SK-N-SH (cell line): ENCODE measurements at regions of chr12 and their contacts with region 1.

Region 1: DNA sequence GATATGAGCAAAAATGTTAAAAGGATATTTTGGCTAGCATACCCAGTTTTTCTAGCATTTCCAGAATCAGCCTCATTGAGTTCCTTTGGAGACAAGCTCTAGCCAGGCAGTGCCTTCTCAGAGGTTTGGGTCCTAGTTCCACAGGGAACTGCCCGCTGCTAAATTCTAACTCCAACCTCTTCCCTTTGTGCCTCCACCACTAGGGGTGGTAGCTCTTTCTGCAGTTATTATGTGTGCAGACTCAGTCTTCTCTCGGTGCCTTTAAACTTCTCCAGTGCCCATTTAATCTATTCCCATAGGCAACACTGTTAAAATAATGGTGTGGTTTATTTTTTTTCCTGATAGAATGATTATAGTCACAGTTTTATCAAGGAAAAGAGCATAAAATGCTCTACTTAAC is 21.5 kb upstream of the SLC25A3 start:
- DNase-seq: no peak
- H3K4me3 ChIP-seq: peak overlapping the region in 1 of 2 experiments; percentile 35; a peak in 1 of 4 replicates
- H3K27ac ChIP-seq: no peak overlapping the region
- H3K4me1 ChIP-seq: no peaks in the 10 kb centered on the region
- H3K27me3 ChIP-seq: no peaks in the 10 kb centered on the region
- CTCF ChIP-seq: no peak; the same call in 1 of the 2 replicates
- EP300 ChIP-seq: no peak
- RAD21 ChIP-seq: no peak

Region 2: DNA sequence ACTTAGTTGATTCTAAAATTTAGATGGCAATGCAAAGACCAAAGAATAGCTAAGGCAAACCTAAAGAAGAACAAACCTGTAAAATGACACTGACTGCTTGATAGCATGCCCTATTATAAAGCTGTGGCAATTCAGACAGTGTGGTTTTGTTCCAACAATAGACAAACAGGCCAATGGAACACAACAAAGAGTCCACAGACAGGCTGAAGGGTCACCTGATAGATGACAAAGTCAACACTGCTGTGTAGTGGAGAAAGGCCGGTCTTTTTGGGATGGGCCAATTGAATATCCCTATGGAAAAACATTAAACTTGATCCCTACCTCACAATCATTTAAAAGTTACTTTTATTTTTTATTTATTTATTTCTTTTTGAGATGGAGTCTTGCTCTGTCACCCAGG is 12.3 kb before region 1 on chr12:
- CTCF ChIA-PET with region 1: interaction called, 18 read pairs
- POLR2A ChIA-PET with region 1: no interaction called
- DNase-seq: no peak
- H3K4me3 ChIP-seq: no peak overlapping the region
- H3K27ac ChIP-seq: no peak overlapping the region
- H3K4me1 ChIP-seq: no peaks in the 10 kb centered on the region
- H3K27me3 ChIP-seq: no peaks in the 10 kb centered on the region
- CTCF ChIP-seq: no peak
- EP300 ChIP-seq: no peak
- RAD21 ChIP-seq: no peak

Region 3: DNA sequence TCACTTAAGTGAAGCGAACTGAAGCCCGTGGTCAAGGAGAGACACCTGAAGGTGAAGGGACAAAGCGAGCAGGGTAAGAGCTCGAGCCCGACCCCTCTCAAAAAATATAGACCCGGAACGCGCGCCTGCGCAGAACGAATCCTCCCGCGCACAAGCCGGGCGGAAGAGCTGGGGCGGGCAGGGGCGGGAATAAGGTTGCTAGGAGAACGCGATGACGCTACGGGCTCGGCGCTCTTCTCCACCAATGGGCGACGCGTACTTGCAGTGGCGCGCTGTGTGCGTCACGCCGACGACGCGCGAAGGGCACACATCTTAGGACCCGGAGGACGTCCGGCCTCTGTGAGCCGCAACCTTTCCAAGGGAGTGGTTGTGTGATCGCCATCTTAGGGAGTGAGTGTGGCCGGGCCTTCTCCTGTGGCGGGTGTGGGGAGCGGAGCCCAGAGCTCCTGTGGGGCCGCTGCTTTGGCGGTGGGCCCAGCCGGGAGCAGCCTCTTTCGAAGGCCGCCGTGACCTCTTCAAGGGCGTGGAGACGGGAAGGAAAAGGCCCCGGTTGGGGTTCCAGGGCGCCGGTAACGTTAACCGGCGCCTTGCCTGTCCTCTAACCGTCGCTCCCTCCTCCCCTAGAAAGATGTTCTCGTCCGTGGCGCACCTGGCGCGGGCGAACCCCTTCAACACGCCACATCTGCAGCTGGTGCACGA is 21.5 kb after region 1 on chr12 and contains the start of gene SLC25A3:
- CTCF ChIA-PET with region 1: interaction called, 29 read pairs
- POLR2A ChIA-PET with region 1: interaction called, 4 read pairs
- DNase-seq: peak; percentile 95
- H3K4me3 ChIP-seq: peak within 1 kb of the TSS; percentile 72 to 99
- H3K27ac ChIP-seq: peak within 1 kb of the TSS; percentile 81 to 85
- H3K4me1 ChIP-seq: peaks cover 0 to 13% of the 10 kb centered on the region in 2 experiments; a peak in 2 of 4 replicates
- H3K27me3 ChIP-seq: no peaks in the 10 kb centered on the region
- CTCF ChIP-seq: no peak
- EP300 ChIP-seq: no peak
- RAD21 ChIP-seq: peak; percentile 16; the same call in 1 of the 2 replicates
- polyA plus RNA-seq, gene SLC25A3: 470 and 528 TPM in 2 replicates

Region 4: GRCh38 chr12:98653866-98654493 is 82.0 kb after region 1 on chr12:
- CTCF ChIA-PET with region 1: interaction called, 26 read pairs
- POLR2A ChIA-PET with region 1: no interaction called
- DNase-seq: peak; percentile 61
- H3K4me3 ChIP-seq: peak overlapping the region in 1 of 2 experiments; percentile 17; a peak in 1 of 4 replicates
- H3K27ac ChIP-seq: no peak overlapping the region
- H3K4me1 ChIP-seq: no peaks in the 10 kb centered on the region
- H3K27me3 ChIP-seq: no peaks in the 10 kb centered on the region
- CTCF ChIP-seq: peak; percentile 78
- EP300 ChIP-seq: no peak
- RAD21 ChIP-seq: peak; percentile 92